Naive thymus-derived CD4-positive, alpha-beta T cell (primary cell): ENCODE measurements at regions of chr2 and their contacts with region 1.

Region 1: GRCh38 chr2:236558993-236559978 is 10.3 kb upstream of the ACKR3 start:
- DNase-seq: no peak
- ATAC-seq: no peak
- H3K4me3 ChIP-seq: no peak overlapping the region
- H3K4me3 Mint-ChIP-seq: peak overlapping the region in 4 of 10 donors; percentile 17 to 45 (median 28)
- H3K27ac ChIP-seq: no peak overlapping the region
- H3K27ac Mint-ChIP-seq: peak overlapping the region in 7 of 9 donors; percentile 14 to 71 (median 53)
- H3K4me1 ChIP-seq: peaks cover 9 to 17% of the 10 kb centered on the region in 2 donors
- H3K4me1 Mint-ChIP-seq: peaks cover 35 to 70% (median 48%) of the 10 kb centered on the region in 7 donors
- H3K27me3 ChIP-seq: no peaks in the 10 kb centered on the region
- H3K27me3 Mint-ChIP-seq: no peaks in the 10 kb centered on the region

Region 2: GRCh38 chr2:235468978-235469655 is 1090.2 kb before region 1 on chr2:
- CTCF ChIA-PET with region 1: no interaction called
- POLR2A ChIA-PET with region 1: no interaction called
- intact Hi-C with region 1: no loop called
- DNase-seq: no peak
- ATAC-seq: no peak
- H3K4me3 ChIP-seq: no peak overlapping the region
- H3K4me3 Mint-ChIP-seq: no peak overlapping the region
- H3K27ac ChIP-seq: no peak overlapping the region
- H3K27ac Mint-ChIP-seq: no peak overlapping the region
- H3K4me1 ChIP-seq: no peaks in the 10 kb centered on the region
- H3K4me1 Mint-ChIP-seq: no peaks in the 10 kb centered on the region
- H3K27me3 ChIP-seq: no peaks in the 10 kb centered on the region
- H3K27me3 Mint-ChIP-seq: peaks cover 0 to 43% (median 6%) of the 10 kb centered on the region in 5 donors

Region 3: DNA sequence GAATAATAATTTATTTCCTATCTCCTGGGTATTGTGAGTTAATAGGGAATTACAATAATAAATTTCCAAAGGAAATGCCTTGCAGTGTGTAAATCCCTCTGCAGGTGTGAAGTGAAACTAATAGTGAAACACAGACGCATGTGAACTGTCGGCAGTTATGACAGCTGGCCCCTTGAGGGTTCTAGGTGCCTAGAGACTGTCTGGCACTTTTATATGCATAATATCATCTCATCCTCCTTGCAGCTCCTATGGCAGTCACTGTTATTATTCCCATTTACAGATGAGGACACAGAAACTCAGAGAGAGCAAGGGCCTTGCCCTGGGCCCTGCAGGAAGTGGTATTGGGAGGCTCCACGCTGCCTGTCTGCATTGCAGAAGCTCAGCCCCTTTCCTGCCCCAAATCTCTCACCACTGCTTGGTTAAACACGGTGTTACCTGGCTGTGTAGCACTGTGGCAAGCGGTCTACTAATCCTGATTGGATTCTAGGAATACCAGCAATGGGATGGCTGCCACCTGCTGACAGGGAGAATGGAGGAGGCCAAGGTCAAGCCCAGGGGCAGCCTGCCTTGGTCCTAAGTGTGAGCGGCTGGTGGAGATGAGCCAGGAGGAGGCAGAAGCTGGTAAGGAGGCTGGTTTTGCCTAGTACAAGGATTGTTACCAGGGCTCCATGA is 22.4 kb before region 1 on chr2:
- CTCF ChIA-PET with region 1: interaction called, 11 read pairs
- POLR2A ChIA-PET with region 1: interaction called, 24 read pairs
- intact Hi-C with region 1: loop called in 1 of 2 experiments (anchors 1 kb)
- DNase-seq: peak; percentile 30 to 73 (median 65)
- ATAC-seq: peak; percentile 92
- H3K4me3 ChIP-seq: peak overlapping the region; percentile 79
- H3K4me3 Mint-ChIP-seq: peak overlapping the region; percentile 92 to 100 (median 98)
- H3K27ac ChIP-seq: peak overlapping the region; percentile 81
- H3K27ac Mint-ChIP-seq: peak overlapping the region; percentile 90 to 99 (median 97)
- H3K4me1 ChIP-seq: peaks cover 20 to 27% of the 10 kb centered on the region in 2 donors
- H3K4me1 Mint-ChIP-seq: peaks cover 43 to 59% (median 55%) of the 10 kb centered on the region in 7 donors
- H3K27me3 ChIP-seq: no peaks in the 10 kb centered on the region
- H3K27me3 Mint-ChIP-seq: peaks cover 0 to 5% (median 0%) of the 10 kb centered on the region in 5 donors

Region 4: GRCh38 chr2:236545814-236546480 is 13.3 kb before region 1 on chr2:
- CTCF ChIA-PET with region 1: interaction called, 5 read pairs
- POLR2A ChIA-PET with region 1: interaction called, 19 read pairs
- intact Hi-C with region 1: loop called in 1 of 2 experiments (anchors 1 kb)
- DNase-seq: peak in 3 of 9 donors; percentile 23 to 36 (median 32)
- ATAC-seq: peak; percentile 74
- H3K4me3 ChIP-seq: peak overlapping the region; percentile 34
- H3K4me3 Mint-ChIP-seq: peak overlapping the region; percentile 49 to 85 (median 68)
- H3K27ac ChIP-seq: peak overlapping the region; percentile 72
- H3K27ac Mint-ChIP-seq: peak overlapping the region; percentile 77 to 96 (median 92)
- H3K4me1 ChIP-seq: peaks cover 60% of the 10 kb centered on the region in 2 donors
- H3K4me1 Mint-ChIP-seq: peaks cover 71 to 97% (median 95%) of the 10 kb centered on the region in 7 donors
- H3K27me3 ChIP-seq: no peaks in the 10 kb centered on the region
- H3K27me3 Mint-ChIP-seq: no peaks in the 10 kb centered on the region